Transverse colon (tissue), 4 donors: ENCODE measurements at regions of chr6 and their contacts with region 1.

Region 1: GRCh38 chr6:149941583-149942431 is at the start of gene ULBP2:
- DNase-seq: peak; percentile 73
- H3K4me3 ChIP-seq: peak within 1 kb of the TSS; percentile 3 to 57 (median 42)
- H3K27ac ChIP-seq: peak within 1 kb of the TSS in 1 of 4 donors; percentile 21
- H3K4me1 ChIP-seq: peaks cover 13 to 29% (median 25%) of the 10 kb centered on the region in 4 donors
- H3K27me3 ChIP-seq: peaks cover 70% of the 10 kb centered on the region
- CTCF ChIP-seq: peak in 1 of 5 experiments; percentile 7
- EP300 ChIP-seq: no peak
- POLR2A ChIP-seq: no peak
- total RNA-seq, gene ULBP2: not detected

Region 2: GRCh38 chr6:149990618-149991471 is 49.0 kb after region 1 on chr6:
- in situ Hi-C with region 1: loop called in 2 of 4 experiments (anchors 10 kb)
- intact Hi-C with region 1: no loop called
- DNase-seq: no peak
- H3K4me3 ChIP-seq: peak overlapping the region in 2 of 4 donors; percentile 15 to 34
- H3K27ac ChIP-seq: no peak overlapping the region
- H3K4me1 ChIP-seq: peaks cover 10 to 21% (median 14%) of the 10 kb centered on the region in 4 donors
- H3K27me3 ChIP-seq: peaks cover 100% of the 10 kb centered on the region
- CTCF ChIP-seq: no peak
- EP300 ChIP-seq: no peak
- POLR2A ChIP-seq: no peak